Endothelial cell of umbilical vein (primary cell): ENCODE measurements at regions of chr7 and their contacts with region 1.

Region 1: DNA sequence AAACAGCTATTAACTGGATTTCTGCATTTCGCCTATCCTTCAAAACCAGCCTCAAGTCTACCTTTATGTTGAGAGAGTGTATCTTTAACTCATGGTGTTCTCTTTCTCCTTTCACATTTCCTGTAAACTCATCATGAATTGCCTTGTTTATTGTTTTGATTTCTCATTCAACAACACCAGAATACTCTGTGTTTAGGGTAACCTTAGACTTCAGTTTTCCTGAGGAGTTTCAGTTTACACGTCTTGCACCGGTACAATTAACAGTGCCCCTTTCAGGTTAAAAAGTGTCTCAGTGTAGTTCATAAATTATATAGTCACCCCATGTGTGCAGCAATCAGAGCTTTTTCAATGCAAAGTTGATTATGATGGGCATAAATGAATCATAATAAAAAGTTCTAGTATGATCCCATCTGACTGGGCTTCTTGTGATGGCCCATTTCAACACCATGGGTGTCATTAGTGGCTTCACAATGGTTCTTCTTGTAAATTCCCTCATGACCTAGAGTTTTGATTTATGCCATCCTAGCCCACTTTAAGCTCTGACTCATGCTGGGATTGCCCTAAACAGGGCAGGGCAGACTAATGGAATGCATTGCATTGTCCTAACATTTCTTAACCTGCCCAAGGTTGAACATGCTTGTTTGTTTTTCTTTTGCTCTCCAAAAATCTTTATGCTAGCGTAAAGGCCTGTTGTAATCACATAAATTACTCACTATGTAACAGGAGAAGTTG is 22.0 kb downstream of the ITGB8 start:
- DNase-seq: peak; percentile 73
- H3K4me3 ChIP-seq: no peak overlapping the region
- H3K27ac ChIP-seq: peak overlapping the region; percentile 86
- H3K4me1 ChIP-seq: peaks cover 30% of the 10 kb centered on the region
- H3K27me3 ChIP-seq: no peaks in the 10 kb centered on the region
- CTCF ChIP-seq: no peak
- POLR2A ChIP-seq: no peak

Region 2: DNA sequence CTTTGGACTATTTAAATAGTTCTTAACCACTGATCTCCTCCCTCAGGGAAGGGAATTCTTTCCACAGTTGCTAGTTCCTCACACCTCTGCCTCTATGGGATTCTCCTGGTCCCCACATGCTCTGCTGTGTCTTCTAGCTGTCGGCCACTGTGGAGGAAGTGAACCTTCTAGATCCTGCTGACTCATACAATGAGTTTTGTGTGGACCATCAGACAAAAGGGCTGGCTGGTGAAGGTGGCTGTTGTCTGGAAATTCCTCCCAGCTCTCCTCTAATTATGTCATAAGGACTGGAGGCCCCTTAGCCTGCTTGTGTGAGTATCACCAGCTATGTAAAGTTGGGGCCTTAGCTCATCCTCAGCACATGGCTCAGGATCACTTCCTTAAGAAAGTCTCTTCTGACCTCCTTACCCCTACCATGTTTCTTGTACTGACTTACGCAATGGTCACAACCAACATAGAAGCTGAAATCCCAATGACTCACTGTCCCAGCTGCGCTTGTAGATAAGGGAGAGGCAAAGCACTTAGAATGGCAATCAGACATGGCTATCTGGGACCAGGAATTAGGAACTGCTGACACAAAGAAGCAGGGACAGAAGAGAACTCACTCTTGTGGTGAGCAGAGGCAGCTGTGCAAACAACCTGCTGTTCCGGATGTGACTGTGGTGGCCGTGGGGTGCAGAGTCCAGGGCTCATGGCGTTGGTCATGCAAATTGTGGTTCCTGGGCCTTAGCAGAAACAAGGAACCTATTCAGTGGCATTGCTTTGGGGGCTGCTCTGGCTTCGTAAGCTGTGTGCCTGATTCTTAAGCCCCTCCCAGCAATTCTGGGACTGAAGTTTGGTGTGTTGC is 133.1 kb before region 1 on chr7:
- CTCF ChIA-PET with region 1: no interaction called
- POLR2A ChIA-PET with region 1: no interaction called
- dilution Hi-C with region 1: no loop called
- intact Hi-C with region 1: loop called (anchors 1 kb)
- DNase-seq: peak; percentile 95
- H3K4me3 ChIP-seq: no peak overlapping the region
- H3K27ac ChIP-seq: peak overlapping the region; percentile 83
- H3K4me1 ChIP-seq: peaks cover 21% of the 10 kb centered on the region
- H3K27me3 ChIP-seq: no peaks in the 10 kb centered on the region
- CTCF ChIP-seq: no peak
- POLR2A ChIP-seq: peak; percentile 78

Region 3: DNA sequence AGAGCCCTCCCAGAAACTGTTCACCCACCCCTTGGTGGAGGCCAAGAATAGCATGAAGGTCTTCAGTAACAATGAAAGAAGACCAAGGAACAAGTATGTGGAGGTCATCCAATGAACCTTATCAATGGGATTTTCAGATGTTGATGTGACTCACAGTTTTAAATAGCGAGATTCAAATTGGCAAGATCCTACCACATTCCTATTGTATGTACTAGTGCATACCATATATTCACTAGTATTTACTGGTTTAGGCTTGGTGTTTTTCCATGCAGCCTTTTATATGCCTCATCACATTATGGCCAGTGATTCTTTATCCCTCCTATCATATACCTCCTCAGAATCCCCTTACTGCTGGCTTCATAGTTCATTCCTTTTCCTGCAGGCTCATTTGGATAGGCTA is 32.4 kb after region 1 on chr7:
- CTCF ChIA-PET with region 1: interaction called, 3 read pairs
- POLR2A ChIA-PET with region 1: no interaction called
- dilution Hi-C with region 1: no loop called
- intact Hi-C with region 1: loop called (anchors 2 kb)
- DNase-seq: peak; percentile 67
- H3K4me3 ChIP-seq: no peak overlapping the region
- H3K27ac ChIP-seq: peak overlapping the region; percentile 3
- H3K4me1 ChIP-seq: peaks cover 28% of the 10 kb centered on the region
- H3K27me3 ChIP-seq: no peaks in the 10 kb centered on the region
- CTCF ChIP-seq: no peak
- POLR2A ChIP-seq: no peak

Region 4: DNA sequence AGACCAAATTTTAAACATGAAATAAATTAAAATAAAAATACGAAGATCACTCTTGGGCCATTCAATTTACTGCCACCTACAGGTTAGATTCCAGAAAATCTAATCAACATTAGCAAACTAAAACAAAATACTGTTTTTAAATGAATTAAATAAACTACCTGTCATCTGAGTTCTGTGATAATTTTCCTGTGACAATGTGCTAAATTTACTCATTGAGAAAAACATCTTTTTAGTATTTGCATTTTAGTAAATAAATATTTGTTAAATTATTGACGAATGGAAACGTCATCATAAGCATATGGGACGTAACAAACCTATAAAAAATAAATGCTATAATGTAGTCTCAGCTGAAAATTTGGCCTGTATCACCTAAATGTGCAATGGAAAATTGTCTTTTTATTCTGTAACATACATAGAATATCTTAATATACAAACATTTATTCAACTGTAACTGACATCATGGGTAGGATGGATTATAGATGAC is 50.0 kb after region 1 on chr7:
- CTCF ChIA-PET with region 1: interaction called, 5 read pairs
- POLR2A ChIA-PET with region 1: no interaction called
- dilution Hi-C with region 1: no loop called
- intact Hi-C with region 1: loop called (anchors 2 kb)
- DNase-seq: no peak
- H3K4me3 ChIP-seq: no peak overlapping the region
- H3K27ac ChIP-seq: no peak overlapping the region
- H3K4me1 ChIP-seq: peaks cover 16% of the 10 kb centered on the region
- H3K27me3 ChIP-seq: no peaks in the 10 kb centered on the region
- CTCF ChIP-seq: peak; percentile 23 to 31
- POLR2A ChIP-seq: no peak

Region 5: DNA sequence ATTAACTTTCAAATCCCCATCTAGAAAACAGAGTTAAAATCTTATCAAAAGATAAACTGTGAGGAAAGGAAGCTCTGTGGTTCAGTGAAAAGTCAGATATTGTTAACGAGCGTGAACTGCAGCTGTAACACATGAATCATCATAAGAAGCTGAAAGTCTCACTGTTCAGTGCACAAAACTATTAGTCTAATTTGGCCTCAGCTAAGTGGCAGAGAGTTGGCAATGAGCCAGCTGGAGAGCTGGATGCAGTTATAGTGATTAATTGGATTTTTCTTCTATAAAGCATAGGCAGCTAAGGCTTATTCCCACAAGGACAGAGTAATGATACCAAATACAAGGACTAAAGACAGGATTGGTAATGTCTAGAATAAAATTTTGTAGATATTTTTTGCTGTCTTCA is 161.6 kb after region 1 on chr7:
- CTCF ChIA-PET with region 1: interaction called, 3 read pairs
- POLR2A ChIA-PET with region 1: no interaction called
- dilution Hi-C with region 1: no loop called
- intact Hi-C with region 1: loop called (anchors 1 kb)
- DNase-seq: peak; percentile 98
- H3K4me3 ChIP-seq: no peak overlapping the region
- H3K27ac ChIP-seq: peak overlapping the region; percentile 74
- H3K4me1 ChIP-seq: peaks cover 33% of the 10 kb centered on the region
- H3K27me3 ChIP-seq: no peaks in the 10 kb centered on the region
- CTCF ChIP-seq: no peak
- POLR2A ChIP-seq: no peak

Region 6: DNA sequence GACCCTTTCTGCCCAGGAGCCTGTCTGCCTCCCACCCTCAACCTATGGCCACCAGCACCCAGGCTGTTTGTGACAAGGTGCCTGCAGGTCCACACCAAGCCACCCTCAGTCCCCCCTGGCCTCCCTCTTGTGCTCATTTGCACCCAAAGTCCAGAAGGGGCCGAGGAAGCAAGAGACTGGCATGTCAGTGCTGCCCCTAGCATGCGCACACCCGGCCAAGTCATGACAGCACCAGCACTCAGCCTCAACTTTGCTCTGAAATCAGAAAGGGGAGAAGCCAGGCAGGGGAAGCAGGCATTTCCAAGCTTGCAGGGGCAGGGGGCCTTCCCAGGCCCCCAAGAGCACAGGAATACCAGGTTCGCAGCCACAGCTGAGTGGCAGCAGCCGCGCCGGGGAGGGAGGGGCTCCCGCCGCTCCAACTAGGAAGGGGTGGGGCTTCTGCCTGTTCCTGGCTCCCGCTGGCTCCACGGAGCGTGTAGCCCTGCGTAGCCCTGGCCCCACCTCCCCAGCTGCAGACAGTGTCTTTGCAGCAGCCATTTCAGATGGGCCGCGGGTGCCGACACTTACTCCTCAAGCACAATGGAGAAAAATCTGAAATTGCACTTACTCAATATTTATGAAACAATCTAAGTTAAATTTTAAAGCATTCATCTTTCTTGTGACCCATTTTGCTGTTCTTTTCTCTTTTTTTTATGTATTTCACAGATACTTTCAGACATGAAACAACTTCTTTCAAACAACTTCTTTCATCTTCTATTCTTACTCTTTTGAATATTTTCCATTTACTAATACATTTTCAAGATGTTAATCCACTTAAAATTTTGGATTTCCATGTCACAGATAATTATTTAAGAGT is 207.8 kb after region 1 on chr7:
- CTCF ChIA-PET with region 1: no interaction called
- POLR2A ChIA-PET with region 1: no interaction called
- dilution Hi-C with region 1: no loop called
- intact Hi-C with region 1: loop called (anchors 1 kb)
- DNase-seq: no peak
- H3K4me3 ChIP-seq: no peak overlapping the region
- H3K27ac ChIP-seq: peak overlapping the region; percentile 100
- H3K4me1 ChIP-seq: peaks cover 24% of the 10 kb centered on the region
- H3K27me3 ChIP-seq: no peaks in the 10 kb centered on the region
- CTCF ChIP-seq: no peak
- POLR2A ChIP-seq: no peak